Activated naive CD4-positive, alpha-beta T cell treated with anti-CD3 and anti-CD28 coated beads for 36 hours (primary cell): ENCODE measurements at regions of chr20 and their contacts with region 1.

Region 1: GRCh38 chr20:24406750-24407510 is 62.5 kb upstream of the SYNDIG1 start:
- DNase-seq: peak; percentile 41
- H3K4me3 Mint-ChIP-seq: peak overlapping the region; percentile 20
- H3K27ac Mint-ChIP-seq: peak overlapping the region; percentile 73
- H3K4me1 Mint-ChIP-seq: peaks cover 27% of the 10 kb centered on the region
- H3K27me3 Mint-ChIP-seq: no peaks in the 10 kb centered on the region

Region 2: DNA sequence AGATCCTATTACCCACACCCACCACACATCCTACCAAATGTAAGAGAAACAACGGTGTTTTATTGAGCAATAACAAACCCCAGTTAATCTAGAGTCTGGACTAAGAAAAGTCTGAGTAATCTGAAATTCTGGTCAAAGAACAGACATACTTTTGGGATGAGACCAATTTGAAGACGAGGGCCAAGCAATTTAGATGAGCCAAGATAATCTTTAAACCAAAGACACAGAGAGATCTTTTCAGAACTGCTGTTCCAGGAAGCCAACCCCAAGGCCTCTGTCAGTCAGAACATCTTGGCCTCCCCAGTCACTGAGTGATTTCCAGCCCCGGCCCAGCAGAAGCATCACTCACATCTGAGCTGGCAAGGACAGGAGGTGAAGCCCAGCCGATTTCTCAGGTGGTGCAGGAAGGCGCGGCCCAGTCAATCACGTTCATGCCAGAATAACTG is 56.0 kb before region 1 on chr20:
- CTCF ChIA-PET with region 1: no interaction called
- intact Hi-C with region 1: no loop called
- DNase-seq: no peak
- H3K4me3 Mint-ChIP-seq: no peak overlapping the region
- H3K27ac Mint-ChIP-seq: no peak overlapping the region
- H3K4me1 Mint-ChIP-seq: no peaks in the 10 kb centered on the region
- H3K27me3 Mint-ChIP-seq: no peaks in the 10 kb centered on the region

Region 3: DNA sequence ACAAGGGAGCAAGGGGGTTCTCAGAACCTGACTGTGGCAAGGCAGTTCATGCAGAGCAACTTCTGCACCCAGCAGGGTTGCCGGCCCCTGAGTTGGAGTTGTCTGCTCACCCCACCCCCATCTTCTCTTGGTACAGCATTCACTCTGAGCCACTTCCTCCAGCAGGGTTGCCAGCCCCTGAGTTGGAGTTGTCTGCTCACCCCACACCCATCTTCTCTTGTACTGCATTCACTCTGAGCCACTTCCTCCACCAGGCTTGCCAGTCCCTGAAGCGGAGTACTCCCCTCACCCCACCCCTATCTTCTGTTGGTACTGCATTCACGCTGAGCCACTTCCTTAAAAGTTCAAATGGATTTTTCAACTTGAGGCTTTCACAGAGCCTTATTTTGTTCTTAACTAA is 17.2 kb before region 1 on chr20:
- CTCF ChIA-PET with region 1: no interaction called
- intact Hi-C with region 1: loop called (anchors 1 kb)
- DNase-seq: peak; percentile 77
- H3K4me3 Mint-ChIP-seq: no peak overlapping the region
- H3K27ac Mint-ChIP-seq: peak overlapping the region; percentile 27
- H3K4me1 Mint-ChIP-seq: peaks cover 27% of the 10 kb centered on the region
- H3K27me3 Mint-ChIP-seq: no peaks in the 10 kb centered on the region